Activated B cell treated with CpG ODN at 0.5 μM for 24 hours (primary cell): ENCODE measurements at regions of chr16 and their contacts with region 1.

Region 1: DNA sequence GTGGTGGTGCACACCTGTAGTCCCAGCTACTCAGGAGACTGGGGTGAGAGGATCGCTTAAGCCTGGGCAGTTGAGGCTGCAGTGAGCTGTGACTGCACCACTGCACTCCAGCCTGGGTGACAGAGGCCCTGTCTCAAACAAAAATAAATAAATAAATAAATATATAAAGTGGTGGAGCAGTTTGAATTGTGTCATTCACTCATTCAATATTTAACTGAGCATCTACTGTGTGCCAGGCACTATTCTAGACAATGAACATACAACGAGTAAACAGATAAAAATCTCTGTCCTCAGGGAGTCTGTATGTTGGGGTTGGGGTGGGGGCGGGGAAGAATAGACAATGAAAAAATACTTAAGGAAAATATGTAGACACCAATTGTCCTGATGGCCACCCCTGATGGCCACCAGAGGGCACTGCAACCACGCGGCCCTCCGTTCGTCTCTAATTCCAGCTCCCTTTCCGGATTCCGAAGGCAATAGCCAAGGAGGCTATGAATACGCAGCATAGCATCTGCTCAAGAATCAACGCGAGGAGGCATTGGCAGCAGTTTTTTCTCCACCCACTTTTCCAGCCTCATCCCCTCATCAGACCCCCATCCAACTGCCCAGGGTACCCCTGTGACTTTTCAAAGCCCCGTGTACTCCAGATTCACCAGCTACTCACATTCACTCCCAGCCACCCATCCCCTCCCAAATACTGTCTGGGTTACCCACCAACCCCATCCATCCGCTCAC is 21.4 kb downstream of the QPRT start:
- DNase-seq: peak; percentile 54
- ATAC-seq: no peak
- H3K4me3 Mint-ChIP-seq: no peak overlapping the region
- H3K27ac Mint-ChIP-seq: peak overlapping the region; percentile 50
- H3K4me1 Mint-ChIP-seq: peaks cover 37% of the 10 kb centered on the region
- H3K27me3 Mint-ChIP-seq: no peaks in the 10 kb centered on the region
- CTCF ChIP-seq: no peak

Region 2: DNA sequence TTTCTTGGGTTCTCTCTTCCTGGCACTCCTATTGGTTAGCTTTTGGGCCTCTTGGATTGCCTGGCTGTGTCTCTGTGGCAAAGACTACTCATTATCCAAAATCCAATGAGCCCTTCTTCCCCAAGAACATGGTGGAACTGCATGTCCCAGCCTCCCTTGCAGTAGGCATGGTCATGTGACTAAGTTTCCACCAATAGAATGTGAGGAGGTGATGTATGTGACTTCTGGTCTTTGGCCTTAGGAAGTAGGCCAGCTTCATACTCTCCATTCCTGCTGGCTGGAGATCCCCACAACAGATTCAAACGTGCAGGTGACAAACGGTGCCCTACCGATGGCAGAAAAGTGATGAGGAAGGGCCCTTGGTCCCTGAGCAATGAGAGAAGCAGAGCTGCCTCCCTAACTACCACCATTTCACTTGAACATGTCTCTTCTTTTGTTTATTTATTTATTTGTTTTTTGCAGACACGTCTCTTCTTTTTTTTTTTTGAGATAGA is 54.7 kb before region 1 on chr16:
- CTCF ChIA-PET with region 1: interaction called, 7 read pairs
- POLR2A ChIA-PET with region 1: interaction called, 10 read pairs
- intact Hi-C with region 1: loop called (anchors 2 kb)
- DNase-seq: no peak
- ATAC-seq: peak; percentile 42
- H3K4me3 Mint-ChIP-seq: peak overlapping the region; percentile 69
- H3K27ac Mint-ChIP-seq: peak overlapping the region; percentile 92
- H3K4me1 Mint-ChIP-seq: peaks cover 42% of the 10 kb centered on the region
- H3K27me3 Mint-ChIP-seq: no peaks in the 10 kb centered on the region
- CTCF ChIP-seq: no peak

Region 3: GRCh38 chr16:29658705-29659104 is 41.7 kb before region 1 on chr16:
- CTCF ChIA-PET with region 1: no interaction called
- POLR2A ChIA-PET with region 1: no interaction called
- intact Hi-C with region 1: no loop called
- DNase-seq: no peak
- ATAC-seq: no peak
- H3K4me3 Mint-ChIP-seq: no peak overlapping the region
- H3K27ac Mint-ChIP-seq: no peak overlapping the region
- H3K4me1 Mint-ChIP-seq: peaks cover 30% of the 10 kb centered on the region
- H3K27me3 Mint-ChIP-seq: no peaks in the 10 kb centered on the region
- CTCF ChIP-seq: no peak

Region 4: GRCh38 chr16:29720699-29721098 is 20.3 kb after region 1 on chr16:
- CTCF ChIA-PET with region 1: interaction called, 19 read pairs
- POLR2A ChIA-PET with region 1: interaction called, 3 read pairs
- intact Hi-C with region 1: no loop called
- DNase-seq: no peak
- ATAC-seq: no peak
- H3K4me3 Mint-ChIP-seq: no peak overlapping the region
- H3K27ac Mint-ChIP-seq: no peak overlapping the region
- H3K4me1 Mint-ChIP-seq: peaks cover 7% of the 10 kb centered on the region
- H3K27me3 Mint-ChIP-seq: no peaks in the 10 kb centered on the region
- CTCF ChIP-seq: no peak

Region 5: DNA sequence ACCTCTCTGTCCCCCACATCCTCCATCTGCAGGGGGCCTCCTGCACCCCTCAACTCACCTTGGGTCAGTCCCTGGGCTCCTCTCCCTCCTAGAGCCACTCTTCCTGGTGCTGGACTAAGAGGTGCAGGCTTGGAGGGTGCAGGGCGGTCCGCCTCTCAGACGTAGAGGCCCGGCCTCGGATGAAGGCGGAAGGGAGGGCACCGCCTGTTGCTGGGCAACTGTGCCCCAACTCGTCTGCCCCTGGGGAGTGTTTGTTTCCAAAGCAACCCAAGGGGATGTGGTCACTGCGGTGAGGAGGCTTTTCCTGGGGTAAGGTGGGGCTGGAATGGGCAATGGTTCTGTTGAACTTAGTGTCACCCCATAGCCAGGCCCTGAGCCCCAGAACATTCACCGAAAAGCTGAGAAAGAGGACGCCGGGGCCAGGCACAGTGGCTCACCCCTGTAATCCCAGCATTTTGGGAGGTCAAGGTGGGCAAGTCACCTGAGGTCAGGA is 45.5 kb after region 1 on chr16 and contains the start of gene C16orf54:
- CTCF ChIA-PET with region 1: interaction called, 4 read pairs
- POLR2A ChIA-PET with region 1: interaction called, 6 read pairs
- intact Hi-C with region 1: loop called (anchors 2 kb)
- DNase-seq: peak; percentile 80
- ATAC-seq: peak; percentile 86
- H3K4me3 Mint-ChIP-seq: peak within 1 kb of the TSS; percentile 94
- H3K27ac Mint-ChIP-seq: peak within 1 kb of the TSS; percentile 96
- H3K4me1 Mint-ChIP-seq: peaks cover 65% of the 10 kb centered on the region
- H3K27me3 Mint-ChIP-seq: no peaks in the 10 kb centered on the region
- CTCF ChIP-seq: no peak
- total RNA-seq, gene C16orf54: 20.4 and 22.5 TPM in 2 replicates

Region 6: DNA sequence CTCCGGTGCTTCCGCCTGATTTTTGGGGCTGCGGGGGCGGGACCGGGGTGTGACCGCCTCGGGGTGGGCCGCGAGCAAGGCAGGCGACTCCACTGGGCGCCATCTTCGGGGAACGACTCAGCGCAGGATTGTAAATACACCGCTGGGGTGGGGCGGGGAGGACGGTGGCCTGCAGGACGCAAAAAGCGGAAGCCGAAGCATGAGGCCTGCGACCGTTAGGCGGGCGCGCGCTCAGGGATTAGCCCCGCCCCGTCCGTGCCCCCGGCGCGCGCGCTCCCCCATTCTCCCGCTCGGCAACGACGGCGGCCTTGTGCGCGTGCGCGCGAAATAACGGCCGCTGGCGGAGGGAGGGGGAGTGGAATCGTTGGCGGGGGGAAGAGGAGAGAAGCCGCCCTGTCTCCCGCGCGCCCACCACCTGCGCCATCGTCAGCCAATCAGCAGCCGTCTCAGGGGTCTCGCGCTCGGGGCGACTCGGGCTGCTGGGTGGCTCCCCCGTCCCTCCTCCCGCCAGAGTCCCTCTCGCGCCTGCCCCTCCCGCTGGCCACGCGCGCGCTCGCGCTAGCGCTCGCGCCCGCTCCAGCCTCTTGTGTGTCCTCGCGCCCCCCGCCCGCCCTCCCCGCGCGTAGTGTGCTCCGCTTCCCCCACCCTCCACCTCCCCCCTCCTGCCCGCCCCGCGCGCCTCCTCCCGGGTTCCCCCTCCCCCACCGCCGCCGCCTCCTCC is 105.1 kb after region 1 on chr16:
- CTCF ChIA-PET with region 1: interaction called, 12 read pairs
- POLR2A ChIA-PET with region 1: interaction called, 29 read pairs
- intact Hi-C with region 1: no loop called
- DNase-seq: peak; percentile 96
- ATAC-seq: peak; percentile 70
- H3K4me3 Mint-ChIP-seq: peak overlapping the region; percentile 100
- H3K27ac Mint-ChIP-seq: peak overlapping the region; percentile 100
- H3K4me1 Mint-ChIP-seq: peaks cover 45% of the 10 kb centered on the region
- H3K27me3 Mint-ChIP-seq: no peaks in the 10 kb centered on the region
- CTCF ChIP-seq: no peak

Region 7: GRCh38 chr16:30018731-30019158 is 318.3 kb after region 1 on chr16:
- CTCF ChIA-PET with region 1: interaction called, 4 read pairs
- POLR2A ChIA-PET with region 1: interaction called, 7 read pairs
- intact Hi-C with region 1: loop called (anchors 1 kb)
- DNase-seq: no peak
- ATAC-seq: no peak
- H3K4me3 Mint-ChIP-seq: no peak overlapping the region
- H3K27ac Mint-ChIP-seq: no peak overlapping the region
- H3K4me1 Mint-ChIP-seq: peaks cover 11% of the 10 kb centered on the region
- H3K27me3 Mint-ChIP-seq: no peaks in the 10 kb centered on the region
- CTCF ChIP-seq: no peak

Region 8: GRCh38 chr16:30183233-30184095 is 483.0 kb after region 1 on chr16 and contains the start of gene CORO1A:
- CTCF ChIA-PET with region 1: no interaction called
- POLR2A ChIA-PET with region 1: no interaction called
- intact Hi-C with region 1: no loop called
- DNase-seq: peak; percentile 86
- ATAC-seq: peak; percentile 60
- H3K4me3 Mint-ChIP-seq: peak within 1 kb of the TSS; percentile 98
- H3K27ac Mint-ChIP-seq: peak within 1 kb of the TSS; percentile 97
- H3K4me1 Mint-ChIP-seq: peaks cover 41% of the 10 kb centered on the region
- H3K27me3 Mint-ChIP-seq: no peaks in the 10 kb centered on the region
- CTCF ChIP-seq: no peak
- total RNA-seq, gene CORO1A: 1,030 and 1,060 TPM in 2 replicates